CD8-positive, alpha-beta T cell (primary cell): ENCODE measurements at regions of chr7 and their contacts with region 1.

Region 1: DNA sequence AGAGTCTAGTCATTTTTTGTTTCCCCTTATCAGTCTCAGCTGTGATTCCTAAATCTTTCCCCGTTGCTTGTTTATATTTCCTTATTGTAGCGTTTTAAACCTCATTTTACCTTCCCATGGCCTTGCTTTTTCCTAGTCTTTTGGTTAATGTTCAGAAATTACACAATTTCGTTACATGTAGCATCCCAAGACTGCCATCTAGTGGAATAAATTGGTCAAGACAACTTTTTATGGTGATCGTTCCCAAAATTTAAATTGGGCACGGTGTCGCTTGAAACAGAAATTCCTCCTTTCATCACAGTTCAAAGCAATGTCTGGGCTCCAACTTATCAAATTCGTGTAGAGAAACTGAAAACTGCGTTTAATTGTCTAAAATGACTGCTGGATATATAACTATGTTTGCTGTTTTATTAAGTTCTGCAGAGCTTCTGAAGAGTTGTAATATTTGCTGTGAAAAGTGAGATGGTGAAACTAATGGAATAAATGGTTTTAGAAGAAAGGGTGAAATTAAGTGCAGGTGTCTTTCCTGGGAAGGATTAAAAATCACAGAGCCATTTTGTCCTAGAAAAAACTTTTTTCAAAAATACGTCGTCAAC is 370.2 kb downstream of the PHF14 start:
- DNase-seq: peak in 2 of 9 experiments; percentile 37 to 49
- ATAC-seq: no peak
- H3K4me3 ChIP-seq: no peak overlapping the region
- H3K4me3 Mint-ChIP-seq: no peak overlapping the region
- H3K27ac ChIP-seq: no peak overlapping the region
- H3K27ac Mint-ChIP-seq: no peak overlapping the region
- H3K4me1 ChIP-seq: no peaks in the 10 kb centered on the region
- H3K4me1 Mint-ChIP-seq: peaks cover 4% of the 10 kb centered on the region
- H3K27me3 ChIP-seq: no peaks in the 10 kb centered on the region
- H3K27me3 Mint-ChIP-seq: peaks cover 4% of the 10 kb centered on the region
- CTCF ChIP-seq: peak; percentile 88

Region 2: DNA sequence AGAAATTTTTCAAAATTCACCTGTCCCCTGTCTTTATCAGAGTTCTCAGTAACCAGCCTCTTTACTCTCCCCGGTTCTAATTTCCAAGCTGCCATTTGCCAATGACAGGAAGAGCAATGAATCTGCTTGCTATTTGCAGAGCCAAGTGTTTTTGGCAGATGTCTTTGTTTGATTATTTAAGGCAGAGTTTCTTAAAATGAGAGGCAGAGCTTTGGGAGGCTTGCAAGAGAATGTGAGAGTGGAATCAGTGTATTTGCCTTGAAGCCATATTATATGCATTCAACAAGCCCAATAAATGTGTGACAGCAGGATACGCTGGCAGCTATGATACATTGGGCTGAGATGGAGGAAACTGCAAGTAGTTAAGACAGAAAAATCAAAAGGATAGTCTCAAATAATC is 173.7 kb before region 1 on chr7:
- CTCF ChIA-PET with region 1: no interaction called
- POLR2A ChIA-PET with region 1: no interaction called
- intact Hi-C with region 1: no loop called
- DNase-seq: no peak
- ATAC-seq: no peak
- H3K4me3 ChIP-seq: no peak overlapping the region
- H3K4me3 Mint-ChIP-seq: no peak overlapping the region
- H3K27ac ChIP-seq: no peak overlapping the region
- H3K27ac Mint-ChIP-seq: no peak overlapping the region
- H3K4me1 ChIP-seq: no peaks in the 10 kb centered on the region
- H3K4me1 Mint-ChIP-seq: no peaks in the 10 kb centered on the region
- H3K27me3 ChIP-seq: no peaks in the 10 kb centered on the region
- H3K27me3 Mint-ChIP-seq: no peaks in the 10 kb centered on the region
- CTCF ChIP-seq: no peak

Region 3: GRCh38 chr7:11313801-11314200 is 30.1 kb before region 1 on chr7:
- CTCF ChIA-PET with region 1: no interaction called
- POLR2A ChIA-PET with region 1: no interaction called
- intact Hi-C with region 1: loop called in 1 of 2 experiments (anchors 1 kb)
- DNase-seq: no peak
- ATAC-seq: no peak
- H3K4me3 ChIP-seq: no peak overlapping the region
- H3K4me3 Mint-ChIP-seq: no peak overlapping the region
- H3K27ac ChIP-seq: no peak overlapping the region
- H3K27ac Mint-ChIP-seq: no peak overlapping the region
- H3K4me1 ChIP-seq: no peaks in the 10 kb centered on the region
- H3K4me1 Mint-ChIP-seq: no peaks in the 10 kb centered on the region
- H3K27me3 ChIP-seq: no peaks in the 10 kb centered on the region
- H3K27me3 Mint-ChIP-seq: peaks cover 3% of the 10 kb centered on the region
- CTCF ChIP-seq: no peak

Region 4: DNA sequence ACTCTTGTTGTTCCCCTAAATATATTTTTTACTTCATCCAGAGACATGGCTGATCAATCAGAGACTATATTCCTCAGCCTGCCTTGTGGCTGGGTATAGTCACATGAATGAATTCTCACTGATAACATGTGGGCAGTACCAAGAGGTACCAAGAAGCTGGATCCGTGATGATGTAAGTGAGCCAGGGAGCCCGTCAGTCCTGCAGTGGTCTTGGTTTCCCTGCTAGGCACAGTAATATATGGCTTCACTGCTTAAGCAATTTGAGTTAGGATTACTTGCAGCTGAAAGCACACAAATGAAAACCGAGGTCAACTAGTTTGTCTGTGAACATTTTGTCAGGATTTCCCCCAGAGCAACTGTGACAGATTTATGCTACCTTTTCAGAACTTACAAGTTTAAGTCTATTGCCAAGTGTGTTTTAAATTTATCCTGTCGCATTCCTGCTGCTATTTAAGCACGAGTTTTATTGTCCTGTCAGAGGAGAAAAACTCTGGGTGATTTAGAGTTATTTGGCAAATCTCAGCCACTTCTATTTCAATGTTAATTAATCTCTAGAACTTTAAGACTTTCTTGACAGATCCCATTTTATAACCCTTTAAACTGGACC is 11.6 kb after region 1 on chr7:
- CTCF ChIA-PET with region 1: interaction called, 18 read pairs
- POLR2A ChIA-PET with region 1: no interaction called
- intact Hi-C with region 1: no loop called
- DNase-seq: no peak
- ATAC-seq: no peak
- H3K4me3 ChIP-seq: no peak overlapping the region
- H3K4me3 Mint-ChIP-seq: no peak overlapping the region
- H3K27ac ChIP-seq: no peak overlapping the region
- H3K27ac Mint-ChIP-seq: no peak overlapping the region
- H3K4me1 ChIP-seq: no peaks in the 10 kb centered on the region
- H3K4me1 Mint-ChIP-seq: no peaks in the 10 kb centered on the region
- H3K27me3 ChIP-seq: no peaks in the 10 kb centered on the region
- H3K27me3 Mint-ChIP-seq: no peaks in the 10 kb centered on the region
- CTCF ChIP-seq: no peak

Region 5: GRCh38 chr7:11875635-11876034 is 531.7 kb after region 1 on chr7:
- CTCF ChIA-PET with region 1: no interaction called
- POLR2A ChIA-PET with region 1: no interaction called
- intact Hi-C with region 1: no loop called
- DNase-seq: no peak
- ATAC-seq: no peak
- H3K4me3 ChIP-seq: no peak overlapping the region
- H3K4me3 Mint-ChIP-seq: no peak overlapping the region
- H3K27ac ChIP-seq: no peak overlapping the region
- H3K27ac Mint-ChIP-seq: no peak overlapping the region
- H3K4me1 ChIP-seq: no peaks in the 10 kb centered on the region
- H3K4me1 Mint-ChIP-seq: no peaks in the 10 kb centered on the region
- H3K27me3 ChIP-seq: no peaks in the 10 kb centered on the region
- H3K27me3 Mint-ChIP-seq: no peaks in the 10 kb centered on the region
- CTCF ChIP-seq: no peak